Common myeloid progenitor, CD34-positive (primary cell): ENCODE measurements at regions of chr9 and their contacts with region 1.

Region 1: DNA sequence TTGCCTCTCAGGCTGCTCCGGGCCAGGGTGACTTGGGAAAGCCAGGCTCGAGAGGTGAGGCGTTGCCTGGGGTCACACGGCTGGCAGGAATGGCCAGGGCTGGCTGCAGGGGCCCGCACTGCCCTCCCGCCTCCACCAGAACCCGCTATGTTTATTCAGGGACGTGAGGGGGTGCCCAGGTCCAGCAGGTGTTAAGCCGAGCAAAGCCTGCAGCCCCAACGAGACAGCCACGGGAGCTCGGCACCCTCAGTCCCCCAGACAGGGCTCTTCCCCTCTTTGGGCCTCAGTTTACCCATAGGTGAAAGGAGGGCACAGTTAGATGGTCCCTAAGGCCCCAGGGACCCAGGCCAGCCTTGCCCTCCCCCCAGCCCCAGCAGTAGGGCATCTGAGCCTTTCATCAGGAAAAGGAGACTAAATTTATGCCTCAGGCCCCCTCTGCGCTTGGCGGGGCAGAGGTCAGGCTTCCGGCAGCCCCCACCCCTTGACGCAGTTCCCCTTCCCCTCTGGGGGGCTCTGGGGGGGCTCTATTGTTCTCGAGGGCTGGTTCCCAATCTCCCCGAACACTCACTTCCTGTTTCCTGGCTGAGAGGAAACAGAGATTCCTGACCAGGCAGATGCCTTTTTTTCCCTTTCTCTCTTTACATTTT is 7.1 kb upstream of the EGFL7 start:
- DNase-seq: peak; percentile 94 to 98 (median 97)
- H3K4me3 ChIP-seq: peak overlapping the region in 4 of 7 experiments; percentile 88 to 94 (median 90)
- H3K27ac ChIP-seq: peak overlapping the region; percentile 93
- H3K4me1 ChIP-seq: peaks cover 0 to 93% (median 77%) of the 10 kb centered on the region in 4 experiments
- H3K27me3 ChIP-seq: no peaks in the 10 kb centered on the region

Region 2: DNA sequence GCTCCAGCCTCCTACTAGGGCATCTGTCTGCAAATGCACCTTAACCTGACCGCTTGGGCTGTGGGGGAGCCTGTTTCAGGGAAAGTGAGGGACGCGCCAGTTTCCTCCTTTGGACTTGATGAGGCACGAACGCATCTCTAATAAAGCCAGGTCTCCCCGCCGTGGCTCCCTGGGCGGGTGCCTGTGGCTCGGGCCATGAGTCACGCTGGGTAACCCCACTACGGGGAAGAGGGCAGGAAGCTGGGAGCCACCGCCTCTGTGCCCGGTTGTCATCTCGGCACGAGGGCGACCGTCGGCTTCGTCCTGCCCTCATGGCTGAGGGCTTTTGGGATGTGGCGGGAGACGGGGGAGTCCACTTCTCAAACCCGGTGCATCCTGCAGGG is 121.9 kb before region 1 on chr9:
- CTCF ChIA-PET with region 1: interaction called, 9 read pairs
- POLR2A ChIA-PET with region 1: interaction called, 15 read pairs
- DNase-seq: peak; percentile 78 to 84 (median 82)
- H3K4me3 ChIP-seq: peak overlapping the region in 5 of 7 experiments; percentile 1 to 61 (median 13)
- H3K27ac ChIP-seq: peak overlapping the region; percentile 58 to 83
- H3K4me1 ChIP-seq: peaks cover 2 to 97% (median 94%) of the 10 kb centered on the region in 4 experiments
- H3K27me3 ChIP-seq: no peaks in the 10 kb centered on the region

Region 3: GRCh38 chr9:136671646-136672430 is 16.2 kb after region 1 on chr9:
- CTCF ChIA-PET with region 1: interaction called, 56 read pairs
- POLR2A ChIA-PET with region 1: interaction called, 48 read pairs
- DNase-seq: peak in 2 of 3 donors; percentile 60 to 65
- H3K4me3 ChIP-seq: no peak overlapping the region
- H3K27ac ChIP-seq: no peak overlapping the region
- H3K4me1 ChIP-seq: peaks cover 0 to 59% (median 44%) of the 10 kb centered on the region in 4 experiments
- H3K27me3 ChIP-seq: no peaks in the 10 kb centered on the region

Region 4: GRCh38 chr9:136700959-136701667 is 45.5 kb after region 1 on chr9:
- CTCF ChIA-PET with region 1: interaction called, 3 read pairs
- POLR2A ChIA-PET with region 1: interaction called, 28 read pairs
- DNase-seq: peak; percentile 78 to 96 (median 95)
- H3K4me3 ChIP-seq: peak overlapping the region in 5 of 7 experiments; percentile 22 to 63 (median 46)
- H3K27ac ChIP-seq: peak overlapping the region; percentile 64 to 84
- H3K4me1 ChIP-seq: peaks cover 2 to 83% (median 75%) of the 10 kb centered on the region in 4 experiments
- H3K27me3 ChIP-seq: no peaks in the 10 kb centered on the region

Region 5: GRCh38 chr9:136711751-136712689 is 56.4 kb after region 1 on chr9 and contains the start of gene DIPK1B:
- CTCF ChIA-PET with region 1: interaction called, 4 read pairs
- POLR2A ChIA-PET with region 1: interaction called, 11 read pairs
- DNase-seq: peak; percentile 58 to 87 (median 78)
- H3K4me3 ChIP-seq: peak within 1 kb of the TSS; percentile 60 to 91 (median 78)
- H3K27ac ChIP-seq: peak within 1 kb of the TSS; percentile 70 to 83
- H3K4me1 ChIP-seq: peaks cover 0 to 50% (median 47%) of the 10 kb centered on the region in 4 experiments
- H3K27me3 ChIP-seq: no peaks in the 10 kb centered on the region

Region 6: DNA sequence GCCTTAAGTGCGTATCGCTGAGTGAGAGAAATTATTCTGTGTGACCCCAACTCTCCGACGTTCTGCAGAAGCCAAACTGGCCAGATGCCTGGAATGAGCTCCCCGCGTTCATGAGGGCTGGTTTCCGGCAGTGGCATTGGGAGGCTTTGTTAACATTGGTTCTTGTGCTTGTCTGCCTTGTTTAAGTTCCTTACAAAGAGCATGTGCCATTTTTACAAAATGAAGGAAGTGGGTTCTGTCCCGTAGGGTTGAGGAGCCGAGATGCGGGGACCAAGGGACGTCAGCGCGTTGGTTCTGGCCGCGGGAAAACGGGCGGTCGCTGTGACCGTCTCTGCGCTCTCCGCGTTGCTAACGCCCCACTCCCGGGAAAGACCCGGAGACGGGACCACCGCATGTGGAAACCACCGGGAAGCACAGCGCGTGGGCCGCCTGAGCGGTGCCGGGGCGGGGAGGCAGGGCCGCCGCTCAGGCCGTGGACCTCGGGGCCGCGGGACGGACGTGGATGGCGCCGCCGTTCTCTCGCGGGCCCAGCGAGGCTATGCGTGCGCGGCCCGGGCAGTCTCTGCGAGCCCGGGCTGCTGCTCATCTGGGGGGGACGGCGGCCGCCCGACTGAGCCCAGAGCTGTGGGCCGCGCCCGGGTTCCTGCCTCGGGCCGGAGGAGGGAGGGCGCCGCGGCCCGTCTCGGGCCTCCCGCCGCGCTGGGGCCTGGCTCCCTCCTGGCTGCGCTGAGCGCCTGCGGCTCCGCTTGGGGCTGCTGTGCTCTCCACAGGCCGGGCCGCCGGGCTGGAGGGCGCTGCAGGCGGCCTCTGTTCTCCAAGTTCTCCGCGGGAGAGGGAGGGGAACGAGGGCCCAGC is 165.5 kb after region 1 on chr9:
- CTCF ChIA-PET with region 1: no interaction called
- POLR2A ChIA-PET with region 1: no interaction called
- DNase-seq: peak in 2 of 3 donors; percentile 49 to 62
- H3K4me3 ChIP-seq: peak overlapping the region in 6 of 7 experiments; percentile 17 to 64 (median 52)
- H3K27ac ChIP-seq: no peak overlapping the region
- H3K4me1 ChIP-seq: peaks cover 0 to 10% (median 5%) of the 10 kb centered on the region in 4 experiments
- H3K27me3 ChIP-seq: peaks cover 0 to 8% (median 0%) of the 10 kb centered on the region in 5 experiments